Lower lobe of right lung (tissue), 2 donors: ENCODE measurements at regions of chr12 and their contacts with region 1.

Region 1: DNA sequence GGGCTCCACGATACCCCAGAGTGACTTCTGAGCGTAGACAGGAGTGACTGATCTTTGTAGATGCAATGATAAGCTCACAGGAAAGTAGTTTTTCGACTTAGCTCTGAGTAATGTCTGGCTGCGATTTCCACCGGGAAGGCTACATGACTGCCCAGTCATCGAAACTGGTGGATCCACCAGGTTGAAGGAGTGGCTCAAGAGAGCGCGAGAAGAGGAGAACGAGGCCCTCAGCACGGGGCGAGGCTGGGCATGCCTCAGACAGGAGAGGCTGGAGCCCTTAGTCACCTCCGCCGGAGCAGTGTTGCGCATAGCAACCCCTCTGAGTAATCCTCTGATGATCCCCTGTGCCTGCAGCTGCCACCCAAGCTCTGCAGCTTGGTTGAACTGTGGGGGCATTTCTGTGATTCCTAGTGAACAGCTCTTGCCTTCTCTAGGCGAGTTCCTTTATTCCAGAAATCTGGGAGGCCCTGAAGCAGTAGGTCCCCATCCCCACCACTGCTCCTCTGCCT is 25.6 kb downstream of the ELK3 start:
- DNase-seq: peak; percentile 87
- ATAC-seq: peak; percentile 95 to 96
- H3K4me3 ChIP-seq: no peak overlapping the region
- H3K27ac ChIP-seq: peak overlapping the region; percentile 71
- H3K4me1 ChIP-seq: peaks cover 51% of the 10 kb centered on the region
- H3K27me3 ChIP-seq: no peaks in the 10 kb centered on the region
- CTCF ChIP-seq: no peak

Region 2: GRCh38 chr12:96069511-96070231 is 150.1 kb before region 1 on chr12:
- intact Hi-C with region 1: loop called (anchors 5 kb)
- DNase-seq: no peak
- ATAC-seq: no peak
- H3K4me3 ChIP-seq: no peak overlapping the region
- H3K27ac ChIP-seq: no peak overlapping the region
- H3K4me1 ChIP-seq: peaks cover 2% of the 10 kb centered on the region
- H3K27me3 ChIP-seq: no peaks in the 10 kb centered on the region
- CTCF ChIP-seq: no peak